PC-9 (cell line): ENCODE measurements at regions of chr17 and their contacts with region 1.

Region 1: GRCh38 chr17:71764505-71764904 is 356.3 kb upstream of the SOX9 start:
- DNase-seq: no peak
- H3K4me3 ChIP-seq: no peak overlapping the region
- H3K27ac ChIP-seq: no peak overlapping the region
- H3K4me1 ChIP-seq: no peaks in the 10 kb centered on the region; the same call in 1 of the 2 replicates
- H3K27me3 ChIP-seq: no peaks in the 10 kb centered on the region
- CTCF ChIP-seq: peak; percentile 48; the same call in 1 of the 2 replicates

Region 2: GRCh38 chr17:71402661-71403141 is 361.8 kb before region 1 on chr17:
- CTCF ChIA-PET with region 1: no interaction called
- POLR2A ChIA-PET with region 1: no interaction called
- intact Hi-C with region 1: no loop called
- DNase-seq: peak; percentile 41 to 72
- H3K4me3 ChIP-seq: no peak overlapping the region
- H3K27ac ChIP-seq: peak overlapping the region; percentile 86
- H3K4me1 ChIP-seq: peaks cover 46% of the 10 kb centered on the region
- H3K27me3 ChIP-seq: no peaks in the 10 kb centered on the region
- CTCF ChIP-seq: no peak

Region 3: DNA sequence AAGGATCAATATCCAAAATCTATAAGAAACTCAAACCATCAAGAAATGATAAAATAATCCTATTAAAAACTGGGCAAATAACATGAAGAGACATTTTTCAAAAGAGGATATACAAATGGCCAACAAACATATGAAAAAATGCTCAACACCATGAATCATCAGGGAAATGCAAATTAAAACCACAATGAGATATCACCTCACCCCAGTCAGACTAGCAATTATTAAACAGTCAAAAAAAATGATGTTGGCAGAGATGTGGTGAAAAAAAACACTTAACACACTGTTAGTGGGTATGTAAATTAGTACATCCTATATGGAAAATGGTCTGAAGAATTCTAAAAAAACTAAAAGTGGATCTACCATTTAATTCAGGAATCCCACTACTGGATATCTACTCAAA is 22.7 kb before region 1 on chr17:
- CTCF ChIA-PET with region 1: no interaction called
- POLR2A ChIA-PET with region 1: interaction called, 12 read pairs
- intact Hi-C with region 1: no loop called
- DNase-seq: no peak
- H3K4me3 ChIP-seq: no peak overlapping the region
- H3K27ac ChIP-seq: no peak overlapping the region
- H3K4me1 ChIP-seq: no peaks in the 10 kb centered on the region
- H3K27me3 ChIP-seq: no peaks in the 10 kb centered on the region
- CTCF ChIP-seq: no peak

Region 4: GRCh38 chr17:71809537-71809936 is 45.0 kb after region 1 on chr17:
- CTCF ChIA-PET with region 1: no interaction called
- POLR2A ChIA-PET with region 1: no interaction called
- intact Hi-C with region 1: no loop called
- DNase-seq: no peak
- H3K4me3 ChIP-seq: no peak overlapping the region
- H3K27ac ChIP-seq: no peak overlapping the region
- H3K4me1 ChIP-seq: peaks cover 10% of the 10 kb centered on the region
- H3K27me3 ChIP-seq: no peaks in the 10 kb centered on the region
- CTCF ChIP-seq: no peak